ENCODE measurements at regions of chr11 and their contacts with region 1.

Region 1: GRCh38 chr11:76919887-76920746 is 59.4 kb downstream of the ACER3 start:
- DNase-seq: peak; percentile 75
- ATAC-seq: peak; percentile 97
- H3K4me3 ChIP-seq: no peak overlapping the region
- H3K27ac ChIP-seq: no peak overlapping the region
- H3K4me1 ChIP-seq: peaks cover 5% of the 10 kb centered on the region
- H3K27me3 ChIP-seq: no peaks in the 10 kb centered on the region
- CTCF ChIP-seq: peak; percentile 89

Region 2: DNA sequence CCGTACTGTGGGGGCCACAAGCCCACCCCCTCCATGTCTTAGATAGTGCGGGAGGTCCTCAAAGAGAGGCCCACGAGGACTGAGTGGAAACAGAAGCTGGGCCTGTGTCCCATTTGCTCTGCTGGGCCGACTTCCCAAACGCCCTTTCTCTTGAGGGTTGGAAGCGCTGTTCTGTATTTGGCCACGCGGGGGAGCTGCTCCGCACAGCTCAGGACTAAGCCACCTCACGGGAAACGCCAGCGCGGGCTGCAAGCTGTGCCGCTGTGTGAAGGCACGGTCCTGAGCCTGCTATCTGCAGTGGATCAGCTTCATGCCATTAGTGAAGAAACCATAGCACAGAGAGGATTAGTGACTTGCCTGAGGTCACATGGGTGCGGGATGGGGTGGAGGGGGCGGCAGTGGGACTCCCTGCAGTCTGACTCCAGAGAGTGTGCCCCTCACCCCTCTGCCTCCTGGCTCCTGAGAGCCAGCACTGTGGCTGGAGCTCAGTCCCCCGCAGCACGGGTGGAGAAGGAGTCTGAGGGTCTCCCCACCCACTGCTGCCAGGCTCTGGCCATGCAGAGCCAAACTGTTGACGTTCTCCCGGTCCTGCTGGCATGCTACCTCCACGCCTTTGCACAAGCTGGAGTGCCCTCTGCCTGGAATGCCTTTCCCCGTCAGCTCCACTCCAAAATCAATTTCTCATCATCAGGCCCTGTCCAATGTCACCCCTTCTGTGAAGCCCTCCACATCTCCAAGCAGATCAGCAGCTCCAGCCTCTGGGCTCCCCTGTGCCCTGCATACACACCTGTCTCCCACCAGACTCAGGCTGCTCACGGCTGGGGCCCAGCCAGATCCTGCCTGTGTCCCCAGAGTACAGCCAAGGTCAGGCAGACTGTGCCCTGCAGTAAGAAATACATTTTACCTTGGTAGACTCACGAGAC is 198.1 kb before region 1 on chr11:
- intact Hi-C with region 1: loop called (anchors 10 kb)
- DNase-seq: peak; percentile 90
- ATAC-seq: peak; percentile 95
- H3K4me3 ChIP-seq: no peak overlapping the region
- H3K27ac ChIP-seq: no peak overlapping the region
- H3K4me1 ChIP-seq: peaks cover 4% of the 10 kb centered on the region
- H3K27me3 ChIP-seq: peaks cover 8% of the 10 kb centered on the region
- CTCF ChIP-seq: peak; percentile 89